Common myeloid progenitor, CD34-positive (primary cell): ENCODE measurements at regions of chr5 and their contacts with region 1.

Region 1: GRCh38 chr5:170293273-170293672 is 4.3 kb downstream of the LCP2 start:
- DNase-seq: peak; percentile 84 to 95 (median 95)
- H3K4me3 ChIP-seq: peak overlapping the region in 6 of 7 experiments; percentile 11 to 94 (median 20)
- H3K27ac ChIP-seq: peak overlapping the region in 1 of 2 experiments; percentile 40
- H3K4me1 ChIP-seq: peaks cover 50 to 89% (median 80%) of the 10 kb centered on the region in 4 experiments
- H3K27me3 ChIP-seq: no peaks in the 10 kb centered on the region

Region 2: DNA sequence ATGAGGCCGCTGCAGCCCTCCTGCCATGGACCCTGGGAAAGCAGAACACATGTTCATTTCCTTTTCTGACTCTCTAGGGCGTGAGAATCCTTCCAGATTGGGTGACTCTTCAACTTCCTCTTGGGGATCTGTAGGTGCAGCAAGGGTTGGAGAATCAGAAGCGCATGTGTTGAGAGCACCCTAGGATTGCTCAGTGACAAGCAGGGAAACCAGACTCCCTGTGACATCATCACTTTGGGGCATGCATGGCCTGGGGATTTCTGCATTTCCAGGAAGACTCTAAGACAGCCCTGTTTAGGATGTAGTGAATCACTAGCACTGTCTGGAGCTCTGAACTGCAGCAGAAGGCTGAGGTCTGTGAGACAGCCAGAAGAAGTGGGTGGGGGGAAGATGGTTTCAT is 19.4 kb after region 1 on chr5:
- CTCF ChIA-PET with region 1: interaction called, 30 read pairs
- POLR2A ChIA-PET with region 1: interaction called, 5 read pairs
- DNase-seq: peak in 2 of 3 donors; percentile 80 to 85
- H3K4me3 ChIP-seq: peak overlapping the region in 1 of 7 experiments; percentile 1
- H3K27ac ChIP-seq: no peak overlapping the region
- H3K4me1 ChIP-seq: peaks cover 13 to 43% (median 37%) of the 10 kb centered on the region in 4 experiments
- H3K27me3 ChIP-seq: no peaks in the 10 kb centered on the region

Region 3: DNA sequence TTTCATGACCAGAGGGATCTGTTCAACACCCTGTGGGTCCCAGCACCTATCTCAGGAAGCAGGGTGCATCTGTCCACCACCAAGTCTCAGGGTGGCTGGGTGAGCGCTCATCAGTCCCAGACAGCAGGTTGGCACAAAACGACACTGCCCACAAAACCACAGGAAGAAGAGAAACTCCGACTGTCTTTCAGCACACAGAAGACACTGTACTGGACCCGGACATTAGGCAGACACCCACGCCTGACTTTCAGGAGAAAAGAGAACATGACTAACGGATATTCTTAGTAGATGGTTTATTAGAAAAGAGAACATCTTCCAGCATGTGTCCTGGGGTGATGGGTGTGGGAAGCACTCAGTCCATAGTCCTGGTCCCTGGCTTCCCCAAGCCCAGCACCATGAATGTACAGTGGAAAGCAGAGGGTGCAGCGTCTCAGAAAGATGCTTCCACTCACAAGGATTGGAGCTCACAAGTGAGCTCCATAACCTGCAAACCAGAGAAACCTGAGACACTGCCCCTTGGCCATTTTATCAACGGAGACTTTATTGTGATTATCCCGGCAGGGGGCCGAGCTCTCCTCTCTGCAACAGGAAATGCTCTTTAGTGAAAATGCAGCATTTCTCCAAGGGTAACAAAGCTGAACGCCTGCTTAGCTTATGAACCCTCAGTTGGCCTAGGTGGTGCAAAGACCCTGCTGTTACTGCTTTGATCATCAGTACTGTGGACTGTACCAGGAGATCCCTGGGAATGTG is 40.1 kb after region 1 on chr5:
- CTCF ChIA-PET with region 1: interaction called, 75 read pairs
- POLR2A ChIA-PET with region 1: interaction called, 11 read pairs
- DNase-seq: peak; percentile 50 to 89 (median 83)
- H3K4me3 ChIP-seq: peak overlapping the region in 2 of 7 experiments; percentile 10 to 46
- H3K27ac ChIP-seq: peak overlapping the region in 1 of 2 experiments; percentile 49
- H3K4me1 ChIP-seq: peaks cover 32 to 90% (median 71%) of the 10 kb centered on the region in 4 experiments
- H3K27me3 ChIP-seq: no peaks in the 10 kb centered on the region

Region 4: GRCh38 chr5:170338933-170339779 is 45.9 kb after region 1 on chr5:
- CTCF ChIA-PET with region 1: interaction called, 75 read pairs
- POLR2A ChIA-PET with region 1: interaction called, 5 read pairs
- DNase-seq: peak in 2 of 3 donors; percentile 35 to 36
- H3K4me3 ChIP-seq: no peak overlapping the region
- H3K27ac ChIP-seq: no peak overlapping the region
- H3K4me1 ChIP-seq: peaks cover 7 to 47% (median 29%) of the 10 kb centered on the region in 4 experiments
- H3K27me3 ChIP-seq: no peaks in the 10 kb centered on the region

Region 5: GRCh38 chr5:170348137-170348633 is 54.9 kb after region 1 on chr5:
- CTCF ChIA-PET with region 1: interaction called, 75 read pairs
- POLR2A ChIA-PET with region 1: no interaction called
- DNase-seq: peak; percentile 39 to 54 (median 54)
- H3K4me3 ChIP-seq: no peak overlapping the region
- H3K27ac ChIP-seq: no peak overlapping the region
- H3K4me1 ChIP-seq: peaks cover 0 to 17% (median 9%) of the 10 kb centered on the region in 4 experiments
- H3K27me3 ChIP-seq: no peaks in the 10 kb centered on the region

Region 6: DNA sequence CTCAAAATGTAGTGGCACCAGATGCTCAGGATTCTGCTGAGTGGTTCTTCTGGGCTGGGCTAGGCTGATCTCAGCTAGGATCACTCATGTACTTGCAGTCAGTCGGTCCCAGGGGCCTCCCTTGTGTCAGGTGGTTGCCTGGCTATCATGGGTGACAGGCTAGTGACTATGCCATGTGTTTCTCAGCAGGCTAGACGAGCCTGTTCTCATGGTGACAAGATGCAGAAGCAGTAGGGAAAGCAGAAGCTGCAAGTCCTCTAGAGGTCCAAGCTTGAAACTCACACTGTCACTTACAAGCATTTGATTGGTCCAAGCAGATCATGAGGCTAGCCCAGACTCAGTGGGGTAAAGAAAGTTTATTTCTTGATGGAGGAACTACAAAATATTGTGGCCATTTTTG is 111.1 kb after region 1 on chr5:
- CTCF ChIA-PET with region 1: interaction called, 11 read pairs
- POLR2A ChIA-PET with region 1: no interaction called
- DNase-seq: peak; percentile 41 to 88 (median 79)
- H3K4me3 ChIP-seq: no peak overlapping the region
- H3K27ac ChIP-seq: no peak overlapping the region
- H3K4me1 ChIP-seq: peaks cover 5 to 25% (median 20%) of the 10 kb centered on the region in 4 experiments
- H3K27me3 ChIP-seq: no peaks in the 10 kb centered on the region